ENCODE measurements at regions of chr1 and their contacts with region 1.

Region 1: GRCh38 chr1:11735854-11736745 is at the start of gene AGTRAP:
- DNase-seq: peak; percentile 89
- H3K4me3 Mint-ChIP-seq: peak within 1 kb of the TSS; percentile 97
- H3K27ac Mint-ChIP-seq: peak within 1 kb of the TSS; percentile 98
- H3K4me1 Mint-ChIP-seq: peaks cover 7% of the 10 kb centered on the region
- H3K27me3 Mint-ChIP-seq: no peaks in the 10 kb centered on the region
- CTCF ChIP-seq: no peak
- total RNA-seq, gene AGTRAP: 68.4 and 73.1 TPM in 2 replicates

Region 2: GRCh38 chr1:11784993-11785769 is 49.1 kb after region 1 on chr1:
- CTCF ChIA-PET with region 1: no interaction called
- POLR2A ChIA-PET with region 1: interaction called, 11 read pairs
- intact Hi-C with region 1: no loop called
- DNase-seq: peak; percentile 69
- H3K4me3 Mint-ChIP-seq: no peak overlapping the region
- H3K27ac Mint-ChIP-seq: no peak overlapping the region
- H3K4me1 Mint-ChIP-seq: peaks cover under 1% of the 10 kb centered on the region
- H3K27me3 Mint-ChIP-seq: no peaks in the 10 kb centered on the region
- CTCF ChIP-seq: peak; percentile 87

Measured in MCF 10A (cell line).